ENCODE measurements at regions of chr22 and their contacts with region 1.

Region 1: GRCh38 chr22:33302049-33302545 is 243.9 kb upstream of the SYN3 start:
- DNase-seq: peak; percentile 83 to 92 (median 92)
- ATAC-seq: peak; percentile 89 to 90
- H3K4me3 ChIP-seq: no peak overlapping the region
- H3K27ac ChIP-seq: no peak overlapping the region
- H3K4me1 ChIP-seq: no peaks in the 10 kb centered on the region
- H3K27me3 ChIP-seq: no peaks in the 10 kb centered on the region

Region 2: GRCh38 chr22:32951076-32951806 is 350.9 kb before region 1 on chr22:
- intact Hi-C with region 1: no loop called
- DNase-seq: no peak
- ATAC-seq: peak in 1 of 2 donors; percentile 27
- H3K4me3 ChIP-seq: no peak overlapping the region
- H3K27ac ChIP-seq: peak overlapping the region; percentile 20
- H3K4me1 ChIP-seq: peaks cover 17% of the 10 kb centered on the region
- H3K27me3 ChIP-seq: no peaks in the 10 kb centered on the region

Region 3: GRCh38 chr22:33247758-33248157 is 54.3 kb before region 1 on chr22:
- intact Hi-C with region 1: no loop called
- DNase-seq: no peak
- ATAC-seq: no peak
- H3K4me3 ChIP-seq: no peak overlapping the region
- H3K27ac ChIP-seq: no peak overlapping the region
- H3K4me1 ChIP-seq: no peaks in the 10 kb centered on the region
- H3K27me3 ChIP-seq: no peaks in the 10 kb centered on the region

Region 4: DNA sequence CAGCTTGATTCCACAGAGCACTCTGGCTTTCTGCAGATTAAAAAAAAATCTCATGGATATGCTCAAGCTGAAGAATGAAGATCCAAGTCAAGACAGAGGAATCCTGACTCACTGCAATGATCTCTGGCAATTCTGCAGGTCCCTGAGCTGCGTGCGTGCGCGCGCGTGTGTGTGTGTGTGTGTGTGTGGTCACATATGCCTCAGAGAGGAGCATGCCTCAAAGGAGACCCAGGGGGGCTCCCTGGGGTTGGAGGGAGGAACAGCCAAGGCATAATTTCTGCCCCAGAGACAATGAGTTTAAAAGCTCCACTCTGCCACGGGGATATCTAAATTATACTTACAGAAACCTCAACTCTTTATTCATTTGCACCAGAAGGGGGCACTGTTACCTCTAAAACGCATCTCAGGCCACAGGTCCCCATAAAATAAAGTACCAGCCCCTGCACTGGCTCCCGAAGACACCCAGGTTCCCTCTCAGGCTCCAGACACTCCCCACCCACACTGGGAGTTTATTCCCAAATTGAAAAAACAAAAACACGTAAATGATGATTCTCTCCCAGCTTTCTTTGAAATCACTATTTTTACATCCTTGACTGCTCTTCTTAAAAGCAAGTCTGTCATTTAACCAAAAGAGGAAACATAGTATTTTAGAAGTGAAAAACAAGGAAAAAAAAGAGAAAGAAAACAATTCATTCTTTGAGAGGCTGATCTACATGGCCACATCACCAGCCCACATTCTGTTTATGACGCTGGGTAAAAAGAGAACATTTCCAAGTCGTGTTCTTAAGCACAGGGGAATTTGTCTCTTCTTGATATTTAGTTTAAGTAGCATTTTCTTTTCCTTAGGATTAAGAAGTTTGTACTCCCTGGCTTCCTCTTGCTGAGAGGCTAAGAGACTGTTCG is 217.2 kb after region 1 on chr22:
- intact Hi-C with region 1: loop called in 1 of 4 experiments (anchors 5 kb)
- DNase-seq: no peak
- ATAC-seq: peak; percentile 62 to 67
- H3K4me3 ChIP-seq: no peak overlapping the region
- H3K27ac ChIP-seq: no peak overlapping the region
- H3K4me1 ChIP-seq: no peaks in the 10 kb centered on the region
- H3K27me3 ChIP-seq: no peaks in the 10 kb centered on the region

Region 5: DNA sequence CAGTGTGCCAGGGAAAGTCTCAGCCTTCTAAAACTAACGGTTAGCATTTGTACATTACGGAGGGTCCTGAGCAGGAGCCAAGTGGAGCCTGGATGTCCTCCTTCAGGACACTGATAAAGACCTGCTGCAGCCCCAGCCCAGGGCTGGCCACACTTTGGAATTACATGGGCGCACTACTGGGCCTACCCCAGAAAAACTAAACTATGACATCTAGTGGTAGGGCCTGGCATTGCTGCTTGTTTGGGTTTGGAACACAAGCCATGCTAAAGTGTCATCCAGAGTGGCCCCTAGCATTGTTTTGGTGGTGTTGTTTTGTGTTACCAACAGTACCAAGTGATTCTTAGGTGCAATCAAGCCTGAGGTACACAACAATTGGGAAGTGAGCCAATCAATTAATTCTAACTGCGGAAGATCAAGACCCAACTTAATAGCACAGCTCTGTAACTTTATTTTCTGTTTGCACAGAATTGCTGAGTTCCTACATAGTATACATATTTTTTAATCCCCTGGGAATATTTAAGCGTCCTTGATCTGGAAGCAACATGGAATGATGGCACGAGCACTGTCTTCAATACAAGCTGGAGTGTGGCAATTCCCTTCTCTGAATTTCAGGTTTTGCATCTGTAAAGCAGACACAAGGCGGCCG is 277.5 kb after region 1 on chr22:
- intact Hi-C with region 1: loop called in 3 of 4 experiments (anchors 5 to 10 kb)
- DNase-seq: peak; percentile 39 to 81 (median 74)
- ATAC-seq: peak; percentile 87 to 89
- H3K4me3 ChIP-seq: no peak overlapping the region
- H3K27ac ChIP-seq: no peak overlapping the region
- H3K4me1 ChIP-seq: no peaks in the 10 kb centered on the region
- H3K27me3 ChIP-seq: no peaks in the 10 kb centered on the region

Region 6: GRCh38 chr22:34105461-34106062 is 803.5 kb after region 1 on chr22:
- intact Hi-C with region 1: loop called in 3 of 4 experiments (anchors 10 kb)
- DNase-seq: peak; percentile 49 to 81 (median 71)
- ATAC-seq: peak; percentile 63 to 68
- H3K4me3 ChIP-seq: no peak overlapping the region
- H3K27ac ChIP-seq: no peak overlapping the region
- H3K4me1 ChIP-seq: no peaks in the 10 kb centered on the region
- H3K27me3 ChIP-seq: peaks cover 2% of the 10 kb centered on the region

Region 7: GRCh38 chr22:34111210-34111824 is 809.2 kb after region 1 on chr22:
- intact Hi-C with region 1: loop called in 3 of 4 experiments (anchors 10 kb)
- DNase-seq: peak in 1 of 3 donors; percentile 43
- ATAC-seq: peak; percentile 47 to 66
- H3K4me3 ChIP-seq: no peak overlapping the region
- H3K27ac ChIP-seq: no peak overlapping the region
- H3K4me1 ChIP-seq: no peaks in the 10 kb centered on the region
- H3K27me3 ChIP-seq: no peaks in the 10 kb centered on the region

Measured in right cardiac atrium (tissue), 5 donors.